HepG2 (cell line): ENCODE measurements at regions of chr21 and their contacts with region 1.

Region 1: GRCh38 chr21:31198575-31198974 is 145.5 kb downstream of the TIAM1 start:
- DNase-seq: peak; percentile 30
- ATAC-seq: peak; percentile 66; the same call in 2 of the 3 replicates
- H3K4me3 ChIP-seq: no peak overlapping the region
- H3K27ac ChIP-seq: no peak overlapping the region
- H3K4me1 ChIP-seq: no peaks in the 10 kb centered on the region; the same call in 1 of the 2 replicates
- H3K27me3 ChIP-seq: no peaks in the 10 kb centered on the region
- CTCF ChIP-seq: peak; percentile 61
- EP300 ChIP-seq: no peak
- POLR2A ChIP-seq: no peak
- RAD21 ChIP-seq: no peak

Region 2: GRCh38 chr21:31266241-31266640 is 67.7 kb after region 1 on chr21:
- CTCF ChIA-PET with region 1: no interaction called
- POLR2A ChIA-PET with region 1: no interaction called
- in situ Hi-C with region 1: no loop called
- intact Hi-C with region 1: no loop called
- DNase-seq: no peak
- ATAC-seq: no peak
- H3K4me3 ChIP-seq: no peak overlapping the region
- H3K27ac ChIP-seq: no peak overlapping the region
- H3K4me1 ChIP-seq: no peaks in the 10 kb centered on the region
- H3K27me3 ChIP-seq: no peaks in the 10 kb centered on the region
- CTCF ChIP-seq: no peak
- EP300 ChIP-seq: no peak
- POLR2A ChIP-seq: no peak
- RAD21 ChIP-seq: no peak

Region 3: DNA sequence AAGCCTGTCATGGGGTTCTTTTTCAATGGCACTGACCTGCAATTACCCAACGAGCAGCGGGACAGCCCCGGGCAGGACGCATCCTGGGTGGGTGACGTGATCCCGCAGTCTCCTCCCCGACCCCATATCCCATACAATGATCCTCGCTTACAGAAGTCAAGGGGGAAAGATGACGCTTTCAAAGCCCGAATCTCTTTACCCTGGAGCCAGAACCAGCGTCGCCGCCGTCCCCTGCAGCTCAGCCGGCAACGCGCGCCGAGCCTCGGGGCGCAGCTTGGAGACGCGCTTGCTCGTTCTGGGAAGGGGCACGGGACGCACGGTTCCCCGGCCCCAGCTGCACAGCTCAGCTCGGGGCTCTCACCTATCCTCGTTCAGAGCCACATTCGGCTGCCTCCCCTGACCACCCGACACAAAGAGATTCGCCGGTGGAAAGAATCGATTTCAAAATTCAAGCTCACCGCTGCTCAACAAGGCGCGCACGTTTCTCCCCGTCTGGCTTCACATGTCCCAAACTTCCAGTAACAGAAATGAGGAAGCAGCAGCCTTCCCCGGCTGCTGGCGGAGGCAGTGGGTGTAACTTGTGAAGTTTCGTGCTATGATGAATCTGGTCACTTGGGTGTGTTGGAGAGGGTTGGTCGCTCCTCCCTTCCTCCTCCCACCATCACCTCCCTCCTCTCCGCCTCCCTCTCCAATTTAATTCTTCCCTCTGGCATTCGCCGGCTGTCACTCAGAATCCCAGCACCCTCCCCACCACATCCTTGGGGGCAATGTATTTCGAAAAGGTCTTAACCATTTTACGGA is 145.3 kb after region 1 on chr21 and contains the start of gene TIAM1:
- CTCF ChIA-PET with region 1: no interaction called
- POLR2A ChIA-PET with region 1: no interaction called
- in situ Hi-C with region 1: no loop called
- intact Hi-C with region 1: loop called (anchors 2 kb)
- DNase-seq: no peak
- ATAC-seq: no peak
- H3K4me3 ChIP-seq: no peak within 1 kb of the TSS
- H3K27ac ChIP-seq: no peak within 1 kb of the TSS
- H3K4me1 ChIP-seq: no peaks in the 10 kb centered on the region
- H3K27me3 ChIP-seq: peaks cover 0 to 20% of the 10 kb centered on the region in 2 experiments; a peak in 2 of 5 replicates
- CTCF ChIP-seq: no peak
- EP300 ChIP-seq: no peak
- POLR2A ChIP-seq: no peak
- RAD21 ChIP-seq: no peak
- total RNA-seq, gene TIAM1: 0.07 and 0.24 TPM in 2 replicates

Region 4: DNA sequence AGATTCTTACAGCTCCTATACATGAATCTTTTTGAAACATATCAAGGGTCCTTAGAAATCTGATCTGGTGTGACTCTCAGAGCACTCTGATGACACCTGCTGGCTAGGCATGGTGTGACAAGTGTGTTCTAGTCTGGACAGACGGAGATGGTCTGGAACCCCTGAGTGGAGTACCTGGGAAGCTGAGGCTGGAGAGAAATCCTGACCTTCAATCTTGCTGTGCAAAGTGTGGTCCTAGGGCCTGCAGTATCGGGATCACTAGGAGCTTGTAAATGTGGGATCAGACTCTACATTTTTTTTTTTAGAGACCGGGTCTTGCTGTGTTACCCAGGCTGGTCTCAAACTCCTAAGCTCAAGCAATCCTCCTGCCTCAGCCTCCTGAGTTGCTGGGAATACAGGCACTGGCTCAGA is 382.3 kb after region 1 on chr21:
- CTCF ChIA-PET with region 1: interaction called, 31 read pairs
- POLR2A ChIA-PET with region 1: no interaction called
- in situ Hi-C with region 1: loop called (anchors 10 kb)
- intact Hi-C with region 1: loop called (anchors 1 kb)
- DNase-seq: peak; percentile 46
- ATAC-seq: peak; percentile 95
- H3K4me3 ChIP-seq: no peak overlapping the region
- H3K27ac ChIP-seq: no peak overlapping the region
- H3K4me1 ChIP-seq: no peaks in the 10 kb centered on the region
- H3K27me3 ChIP-seq: 0 out of 5 replicates have a peak, but pooled peaks cover 0 to 3% of the 10 kb centered on the region in 2 experiments
- CTCF ChIP-seq: peak; percentile 81
- EP300 ChIP-seq: no peak
- POLR2A ChIP-seq: no peak
- RAD21 ChIP-seq: peak; percentile 26; the same call in 1 of the 2 replicates

Region 5: GRCh38 chr21:31604591-31605190 is 406.1 kb after region 1 on chr21:
- CTCF ChIA-PET with region 1: interaction called, 27 read pairs
- POLR2A ChIA-PET with region 1: no interaction called
- in situ Hi-C with region 1: no loop called
- intact Hi-C with region 1: loop called (anchors 1 kb)
- DNase-seq: peak; percentile 41
- ATAC-seq: peak; percentile 88
- H3K4me3 ChIP-seq: no peak overlapping the region
- H3K27ac ChIP-seq: no peak overlapping the region
- H3K4me1 ChIP-seq: no peaks in the 10 kb centered on the region
- H3K27me3 ChIP-seq: no peaks in the 10 kb centered on the region
- CTCF ChIP-seq: peak; percentile 83
- EP300 ChIP-seq: no peak
- POLR2A ChIP-seq: no peak
- RAD21 ChIP-seq: 0 out of 2 replicates have a peak, but pooled peaks have one; percentile 17